ENCODE measurements at regions of chr2 and their contacts with region 1.

Region 1: GRCh38 chr2:39000552-39000951 is 110.9 kb downstream of the ARHGEF33 start:
- DNase-seq: no peak

Region 2: GRCh38 chr2:38978296-38978903 is 22.2 kb before region 1 on chr2:
- intact Hi-C with region 1: loop called in 1 of 2 experiments (anchors 1 kb)
- DNase-seq: no peak

Region 3: DNA sequence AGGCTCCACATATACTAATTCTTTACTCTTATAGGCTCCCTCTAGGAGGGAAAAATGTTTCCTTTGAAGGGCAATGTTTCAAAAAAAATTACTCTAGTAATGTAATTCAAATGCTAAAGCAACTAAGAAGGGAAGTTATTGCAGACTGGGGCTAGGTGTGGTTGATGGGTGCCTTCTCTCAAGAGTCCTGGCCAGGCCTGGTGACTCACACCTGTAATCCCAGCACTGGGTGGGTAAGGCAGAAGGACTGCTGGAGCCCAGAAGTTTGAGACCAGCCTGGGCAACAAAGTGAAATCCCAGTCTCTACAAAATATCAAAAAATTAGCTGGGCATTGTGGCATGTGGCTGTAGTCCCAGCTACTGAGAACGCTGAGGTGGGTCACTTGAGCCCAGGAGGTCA is 274.5 kb after region 1 on chr2:
- intact Hi-C with region 1: no loop called
- DNase-seq: no peak